ENCODE measurements at regions of chr3 and their contacts with region 1.

Region 1: GRCh38 chr3:31704591-31705179 is 172.0 kb downstream of the STT3B start:
- H3K4me3 Mint-ChIP-seq: peak overlapping the region; percentile 15
- H3K27ac Mint-ChIP-seq: no peak overlapping the region
- H3K4me1 Mint-ChIP-seq: peaks cover 21% of the 10 kb centered on the region
- H3K27me3 Mint-ChIP-seq: peaks cover 4% of the 10 kb centered on the region

Region 2: GRCh38 chr3:30779686-30780287 is 924.9 kb before region 1 on chr3:
- intact Hi-C with region 1: loop called (anchors 5 kb)
- H3K4me3 Mint-ChIP-seq: no peak overlapping the region
- H3K27ac Mint-ChIP-seq: no peak overlapping the region
- H3K4me1 Mint-ChIP-seq: peaks cover 25% of the 10 kb centered on the region
- H3K27me3 Mint-ChIP-seq: no peaks in the 10 kb centered on the region

Region 3: GRCh38 chr3:31573036-31573779 is 131.5 kb before region 1 on chr3:
- intact Hi-C with region 1: no loop called
- H3K4me3 Mint-ChIP-seq: no peak overlapping the region
- H3K27ac Mint-ChIP-seq: no peak overlapping the region
- H3K4me1 Mint-ChIP-seq: peaks cover 40% of the 10 kb centered on the region
- H3K27me3 Mint-ChIP-seq: no peaks in the 10 kb centered on the region

Measured in dendritic cell treated with granulocyte-macrophage colony-stimulating factor and Interleukin-4, amounts not matched to agents 40 ng/mL and 50 ng/mL, for 4 days (primary cell).